Head of caudate nucleus (tissue), 42 donors: ENCODE measurements at regions of chr22 and their contacts with region 1.

Region 1: DNA sequence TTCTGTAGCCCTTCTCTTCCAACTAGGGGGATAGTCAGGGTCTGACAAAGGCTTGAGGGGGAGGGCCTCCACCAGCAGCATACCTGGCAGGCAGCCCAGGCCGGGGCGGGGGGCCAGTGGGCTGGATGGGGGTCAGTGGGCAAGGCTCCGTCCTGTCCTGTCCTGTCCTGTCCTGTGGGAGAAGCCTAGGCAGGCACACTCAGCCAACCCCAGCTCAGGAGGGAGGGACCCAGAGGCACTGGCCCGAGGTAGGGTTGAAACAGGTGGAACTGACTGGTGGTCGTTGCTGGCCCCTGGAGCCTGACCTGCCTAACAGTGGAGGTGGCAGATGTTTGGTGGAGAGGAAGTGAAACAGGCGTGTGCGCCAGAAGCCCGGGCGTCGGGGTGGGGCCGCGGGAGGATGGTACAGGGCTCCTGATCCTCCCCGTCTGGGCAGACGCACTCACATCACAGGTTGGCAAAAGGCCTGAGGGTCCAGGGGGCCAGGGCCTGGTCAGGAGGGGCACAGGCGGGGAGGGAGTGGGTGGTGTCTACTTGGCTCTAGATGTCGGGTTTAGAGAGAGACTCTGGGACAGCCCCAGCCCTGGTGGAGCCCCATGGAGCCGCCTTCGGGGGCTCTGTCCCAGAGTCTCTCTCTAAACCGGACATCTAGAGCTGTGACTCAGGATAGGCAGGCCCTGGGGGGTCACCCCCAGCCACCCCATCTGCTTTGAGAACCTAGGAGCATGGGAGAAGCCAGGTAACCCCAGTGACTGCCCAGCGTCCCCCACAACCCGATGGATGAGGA is 32.5 kb upstream of the GRAMD4 start:
- DNase-seq: no peak

Region 2: DNA sequence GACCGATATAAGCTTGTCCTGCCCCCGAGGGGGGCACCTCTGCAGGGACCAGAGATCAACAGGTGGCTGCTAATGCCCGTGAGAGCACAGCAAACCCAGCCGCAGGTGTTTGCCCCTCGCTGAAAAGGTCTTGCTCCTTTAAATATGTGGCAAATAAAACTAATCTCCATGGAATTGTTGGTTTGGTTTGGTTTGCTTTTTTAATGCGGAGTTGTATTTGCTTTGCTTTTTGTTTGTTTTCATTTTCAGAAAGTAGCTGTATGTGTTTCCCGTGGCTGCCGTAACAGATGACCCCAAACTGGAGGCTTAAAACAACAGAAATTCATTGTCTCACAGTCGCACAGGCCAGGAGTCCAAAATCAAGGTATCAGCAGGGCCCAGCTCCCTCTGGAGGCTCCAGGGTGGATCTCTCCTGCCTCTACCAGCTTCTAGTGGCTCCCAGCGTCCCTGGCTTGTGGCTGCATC is 143.3 kb before region 1 on chr22:
- intact Hi-C with region 1: no loop called
- DNase-seq: no peak

Region 3: DNA sequence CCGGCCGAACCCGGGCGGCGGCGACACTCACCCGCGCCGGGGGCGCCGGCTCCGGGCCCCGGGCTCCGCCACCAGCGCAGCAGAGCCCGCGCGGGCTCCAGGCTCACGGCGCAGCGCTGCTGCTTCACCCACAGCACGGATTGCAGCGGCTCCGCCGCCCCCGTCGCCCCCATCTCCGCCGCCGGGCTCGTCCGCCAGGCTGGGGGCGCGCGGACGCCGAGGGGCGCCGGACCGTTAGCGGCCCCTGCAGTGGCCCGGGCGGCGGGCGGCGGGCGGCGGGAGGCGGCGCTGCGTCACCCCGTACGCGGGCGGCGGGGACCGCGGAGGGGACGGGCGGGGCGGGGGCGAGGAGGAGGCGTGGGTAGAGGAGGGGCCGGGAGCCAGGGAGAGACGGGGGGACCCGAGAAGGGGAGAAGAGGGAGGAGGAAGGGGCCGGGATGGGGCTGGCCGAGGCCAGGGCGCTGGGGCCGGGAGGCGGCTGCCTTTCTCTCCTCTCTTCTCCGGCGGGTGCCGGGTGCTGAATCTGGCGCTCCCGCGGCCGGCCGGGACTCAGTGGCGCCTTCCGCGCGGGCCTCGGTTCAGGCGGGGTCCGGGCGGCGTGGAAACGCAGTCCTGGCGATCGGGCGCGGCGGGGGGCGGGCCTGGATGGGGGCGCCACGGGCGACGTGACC is 150.4 kb after region 1 on chr22 and contains the start of gene CERK:
- intact Hi-C with region 1: loop called (anchors 10 kb)
- DNase-seq: peak; percentile 32 to 89 (median 76)